ENCODE measurements at regions of chr1 and their contacts with region 1.

Region 1: DNA sequence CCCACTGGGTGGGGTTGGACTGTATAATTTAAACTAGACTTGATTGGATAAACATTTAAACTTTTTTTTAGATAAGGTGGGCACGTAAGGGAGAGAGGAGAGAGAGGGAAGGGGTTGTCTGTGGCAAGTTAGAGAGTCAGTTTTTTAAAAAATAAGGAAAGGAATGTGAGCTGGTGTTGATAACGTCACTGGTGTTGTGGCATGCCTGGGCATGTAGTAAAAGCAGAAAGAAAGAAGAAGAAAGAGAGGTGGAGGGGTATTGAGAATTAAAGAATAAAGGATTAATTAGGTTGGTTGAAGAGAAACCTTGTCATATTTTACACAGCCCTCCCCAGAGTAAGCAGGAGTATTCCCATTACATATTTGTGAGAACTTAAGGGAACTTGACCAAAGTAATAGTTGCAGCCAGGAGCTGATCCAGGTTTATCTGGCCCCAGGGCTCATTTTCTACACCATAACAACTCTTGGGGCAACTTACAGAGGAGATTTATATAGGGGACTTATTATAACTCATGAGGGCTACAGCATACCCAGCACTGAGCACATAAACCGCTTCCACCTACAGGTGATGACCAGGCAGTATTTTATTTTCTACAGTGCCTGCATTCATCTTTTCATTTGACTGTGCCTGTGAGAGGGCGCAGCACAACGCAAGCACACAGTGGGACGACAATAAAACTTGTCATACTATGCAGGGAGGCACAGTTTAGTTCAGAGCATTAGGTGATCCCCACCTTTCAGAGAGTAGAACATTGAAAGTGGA is 70.2 kb downstream of the CCDC30 start:
- DNase-seq: peak; percentile 28
- ATAC-seq: peak; percentile 60
- H3K4me3 ChIP-seq: no peak overlapping the region
- H3K27ac ChIP-seq: peak overlapping the region; percentile 69; the same call in 1 of the 2 replicates
- H3K4me1 ChIP-seq: no peaks in the 10 kb centered on the region
- H3K27me3 ChIP-seq: no peaks in the 10 kb centered on the region
- CTCF ChIP-seq: no peak
- POLR2A ChIP-seq: no peak
- RAD21 ChIP-seq: no peak

Region 2: GRCh38 chr1:42462828-42463763 is 70.2 kb before region 1 on chr1 and contains the start of gene CCDC30:
- CTCF ChIA-PET with region 1: no interaction called
- POLR2A ChIA-PET with region 1: interaction called, 10 read pairs
- dilution Hi-C with region 1: no loop called
- in situ Hi-C with region 1: no loop called
- intact Hi-C with region 1: no loop called
- DNase-seq: peak; percentile 98
- ATAC-seq: peak; percentile 100
- H3K4me3 ChIP-seq: peak within 1 kb of the TSS; percentile 61
- H3K27ac ChIP-seq: no peak within 1 kb of the TSS
- H3K4me1 ChIP-seq: no peaks in the 10 kb centered on the region
- H3K27me3 ChIP-seq: peaks cover under 1% of the 10 kb centered on the region; the same call in 1 of the 2 replicates
- CTCF ChIP-seq: no peak
- POLR2A ChIP-seq: no peak
- RAD21 ChIP-seq: no peak
- total RNA-seq, gene CCDC30: under 0.01 and 0.18 TPM in 2 replicates

Region 3: GRCh38 chr1:42586016-42586415 is 52.7 kb after region 1 on chr1:
- CTCF ChIA-PET with region 1: no interaction called
- POLR2A ChIA-PET with region 1: no interaction called
- dilution Hi-C with region 1: no loop called
- in situ Hi-C with region 1: no loop called
- intact Hi-C with region 1: no loop called
- DNase-seq: no peak
- ATAC-seq: no peak
- H3K4me3 ChIP-seq: no peak overlapping the region
- H3K27ac ChIP-seq: no peak overlapping the region
- H3K4me1 ChIP-seq: no peaks in the 10 kb centered on the region
- H3K27me3 ChIP-seq: no peaks in the 10 kb centered on the region
- CTCF ChIP-seq: no peak
- POLR2A ChIP-seq: no peak
- RAD21 ChIP-seq: no peak

Measured in IMR-90 (cell line).